ENCODE measurements at regions of chr6 and their contacts with region 1.

Region 1: GRCh38 chr6:112253841-112254816 is at the start of gene LAMA4:
- DNase-seq: peak; percentile 72 to 75
- ATAC-seq: peak; percentile 63 to 89 (median 76)
- H3K4me3 ChIP-seq: peak within 1 kb of the TSS; percentile 66 to 94 (median 81)
- H3K27ac ChIP-seq: peak within 1 kb of the TSS; percentile 91 to 99 (median 97)
- H3K4me1 ChIP-seq: peaks cover 15 to 65% (median 44%) of the 10 kb centered on the region in 9 donors
- H3K27me3 ChIP-seq: peaks cover 0 to 20% (median 0%) of the 10 kb centered on the region in 7 donors
- CTCF ChIP-seq: peak in 1 of 9 donors; percentile 19
- total RNA-seq, gene LAMA4: 35.4 to 103 (median 82.5) TPM

Region 2: GRCh38 chr6:111625461-111626391 is 628.4 kb before region 1 on chr6:
- intact Hi-C with region 1: no loop called
- DNase-seq: peak; percentile 42 to 56
- ATAC-seq: peak; percentile 56 to 82 (median 70)
- H3K4me3 ChIP-seq: peak overlapping the region in 8 of 10 donors; percentile 7 to 47 (median 38)
- H3K27ac ChIP-seq: peak overlapping the region; percentile 17 to 91 (median 70)
- H3K4me1 ChIP-seq: peaks cover 0 to 47% (median 21%) of the 10 kb centered on the region in 9 donors
- H3K27me3 ChIP-seq: no peaks in the 10 kb centered on the region
- CTCF ChIP-seq: no peak

Region 3: GRCh38 chr6:112180095-112180820 is 73.9 kb before region 1 on chr6:
- intact Hi-C with region 1: loop called in 4 of 10 experiments (anchors 5 to 10 kb)
- DNase-seq: peak in 1 of 2 donors; percentile 76
- ATAC-seq: peak in 6 of 8 donors; percentile 53 to 87 (median 74)
- H3K4me3 ChIP-seq: no peak overlapping the region
- H3K27ac ChIP-seq: peak overlapping the region in 3 of 10 donors; percentile 27 to 45 (median 34)
- H3K4me1 ChIP-seq: peaks cover 0 to 22% (median 7%) of the 10 kb centered on the region in 9 donors
- H3K27me3 ChIP-seq: no peaks in the 10 kb centered on the region
- CTCF ChIP-seq: peak; percentile 37 to 89 (median 79)

Region 4: DNA sequence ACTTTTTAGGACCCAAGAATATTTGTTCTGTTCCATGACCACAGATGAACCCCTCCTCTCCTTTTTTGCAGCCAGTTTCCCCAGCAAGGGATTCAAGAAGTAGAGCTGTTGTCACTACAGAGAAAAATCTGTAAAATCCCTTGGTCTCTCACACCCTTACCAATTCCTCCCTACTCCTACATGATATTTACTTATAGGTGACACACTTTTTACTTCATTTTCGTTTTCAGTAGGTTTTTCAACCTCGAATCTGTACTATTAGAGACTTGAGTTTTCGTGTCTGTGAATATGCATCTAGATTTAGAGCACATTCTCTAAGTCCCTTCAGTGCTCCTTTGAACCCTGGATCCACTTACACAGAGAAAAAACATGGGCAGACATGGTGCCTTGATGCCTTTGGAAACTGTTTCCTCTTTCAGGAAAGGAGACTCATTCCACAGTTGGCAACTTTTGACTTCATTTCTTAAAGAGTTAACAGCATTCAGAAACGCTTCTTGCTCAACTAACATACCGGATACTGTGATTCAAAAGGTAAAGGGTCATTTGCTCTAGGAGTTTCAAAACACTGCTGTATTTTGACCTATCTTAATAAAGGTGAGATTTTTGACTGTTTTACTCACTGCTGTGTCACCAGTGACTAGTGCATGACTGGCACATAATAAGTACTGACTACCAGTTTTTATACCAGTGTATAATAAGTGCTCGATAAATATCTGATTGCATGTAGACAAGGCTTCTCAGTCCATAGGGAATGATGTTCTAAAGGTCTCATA is 50.4 kb before region 1 on chr6:
- intact Hi-C with region 1: loop called in 5 of 10 experiments (anchors 5 to 10 kb)
- DNase-seq: no peak
- ATAC-seq: peak in 3 of 8 donors; percentile 13 to 56 (median 17)
- H3K4me3 ChIP-seq: no peak overlapping the region
- H3K27ac ChIP-seq: peak overlapping the region in 7 of 10 donors; percentile 18 to 72 (median 42)
- H3K4me1 ChIP-seq: peaks cover 2 to 56% (median 42%) of the 10 kb centered on the region in 9 donors
- H3K27me3 ChIP-seq: no peaks in the 10 kb centered on the region
- CTCF ChIP-seq: no peak

Region 5: GRCh38 chr6:112216699-112217551 is 37.2 kb before region 1 on chr6:
- intact Hi-C with region 1: loop called in 5 of 10 experiments (anchors 5 kb)
- DNase-seq: no peak
- ATAC-seq: peak in 6 of 8 donors; percentile 25 to 67 (median 51)
- H3K4me3 ChIP-seq: no peak overlapping the region
- H3K27ac ChIP-seq: peak overlapping the region in 9 of 10 donors; percentile 24 to 86 (median 58)
- H3K4me1 ChIP-seq: peaks cover 9 to 91% (median 78%) of the 10 kb centered on the region in 9 donors
- H3K27me3 ChIP-seq: no peaks in the 10 kb centered on the region
- CTCF ChIP-seq: no peak

Region 6: DNA sequence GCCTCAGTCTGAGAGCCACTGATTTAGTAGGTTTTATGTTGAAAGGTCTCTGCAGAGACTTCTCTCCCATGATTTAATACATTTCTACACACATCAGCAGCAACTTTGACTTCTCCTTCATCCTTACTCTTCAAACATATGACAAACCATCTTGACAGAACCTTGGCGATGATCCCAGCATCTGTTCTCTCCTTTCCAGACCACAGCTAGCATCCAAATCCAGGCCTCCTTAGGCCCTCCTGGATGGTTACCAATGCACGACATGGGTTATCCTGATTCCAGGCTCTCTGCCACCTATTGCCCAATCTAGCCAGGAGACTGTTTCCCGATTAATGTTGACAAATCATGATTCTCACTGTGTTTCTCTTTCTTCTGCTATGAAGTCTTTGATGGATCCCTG is 16.5 kb before region 1 on chr6:
- intact Hi-C with region 1: loop called in 1 of 10 experiments (anchors 2 kb)
- DNase-seq: peak in 1 of 2 donors; percentile 77
- ATAC-seq: peak in 6 of 8 donors; percentile 25 to 80 (median 40)
- H3K4me3 ChIP-seq: no peak overlapping the region
- H3K27ac ChIP-seq: peak overlapping the region in 9 of 10 donors; percentile 56 to 89 (median 80)
- H3K4me1 ChIP-seq: peaks cover 8 to 97% (median 79%) of the 10 kb centered on the region in 9 donors
- H3K27me3 ChIP-seq: no peaks in the 10 kb centered on the region
- CTCF ChIP-seq: no peak

Measured in heart right ventricle (tissue), 16 donors.